CD4-positive, alpha-beta T cell (primary cell): ENCODE measurements at regions of chr13 and their contacts with region 1.

Region 1: DNA sequence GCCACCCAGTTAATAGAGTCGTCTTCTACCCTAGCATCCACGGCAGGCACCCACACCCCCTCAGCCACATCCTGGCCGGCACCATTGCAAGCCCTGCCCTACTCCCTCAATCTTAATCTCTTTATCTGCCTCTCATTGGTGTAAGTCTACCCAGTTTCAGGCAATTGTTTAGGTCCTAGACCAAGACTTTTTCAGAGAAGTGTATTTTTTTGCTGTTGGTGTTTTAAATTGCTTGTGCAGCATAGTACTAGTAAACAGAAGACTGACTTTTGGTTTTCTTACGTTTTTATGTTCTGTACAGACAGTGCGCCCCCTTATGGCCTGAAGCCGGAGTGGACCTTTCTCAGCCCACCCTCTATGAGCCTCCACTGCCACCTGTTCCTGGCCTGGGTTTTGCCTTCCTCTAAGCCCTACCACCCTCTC is 2.3 kb upstream of the LCP1 start:
- DNase-seq: peak; percentile 51 to 90 (median 66)
- ATAC-seq: peak; percentile 56
- H3K4me3 ChIP-seq: peak overlapping the region; percentile 21
- H3K4me3 Mint-ChIP-seq: peak overlapping the region; percentile 76
- H3K27ac ChIP-seq: peak overlapping the region; percentile 84 to 91
- H3K27ac Mint-ChIP-seq: peak overlapping the region; percentile 98
- H3K4me1 ChIP-seq: peaks cover 33% of the 10 kb centered on the region
- H3K4me1 Mint-ChIP-seq: peaks cover 47% of the 10 kb centered on the region
- H3K27me3 ChIP-seq: no peaks in the 10 kb centered on the region
- H3K27me3 Mint-ChIP-seq: no peaks in the 10 kb centered on the region
- CTCF ChIP-seq: peak; percentile 74

Region 2: DNA sequence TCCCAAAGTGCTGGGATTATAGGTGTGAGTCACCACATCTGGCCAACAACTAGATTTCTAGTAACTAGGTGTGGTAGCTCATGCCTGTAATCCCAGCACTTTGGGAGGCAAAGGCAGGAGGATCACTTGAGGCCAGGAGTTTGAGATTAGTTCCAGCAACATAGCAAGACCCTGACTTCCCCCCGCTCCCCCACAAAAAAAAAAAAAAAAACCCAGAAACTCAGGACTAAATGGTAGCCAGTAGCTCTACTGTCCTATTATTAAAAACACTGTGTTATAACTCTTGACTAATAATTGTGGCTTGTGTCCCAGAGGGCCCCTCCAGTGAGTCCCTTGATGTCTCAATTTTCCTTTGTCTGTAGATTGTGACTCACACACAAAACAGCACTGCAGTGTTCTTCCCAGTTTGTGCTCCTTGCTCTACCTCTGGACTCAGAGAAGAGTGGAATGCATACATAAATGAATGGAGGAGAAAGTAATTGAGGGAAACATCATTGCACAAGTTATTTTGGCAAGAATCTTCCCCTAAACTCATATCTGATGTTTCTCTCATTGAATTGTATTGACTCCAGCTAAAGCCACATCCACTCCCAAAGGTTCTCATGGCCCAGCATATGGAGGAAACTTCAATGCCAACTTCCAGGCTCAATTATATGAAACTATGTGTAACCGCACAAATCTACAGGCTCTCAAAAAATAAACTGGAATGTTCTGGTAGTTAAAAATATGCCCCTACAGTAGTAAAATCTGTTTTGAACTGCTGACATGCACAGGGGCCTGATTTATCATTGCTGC is 852.1 kb before region 1 on chr13:
- CTCF ChIA-PET with region 1: no interaction called
- POLR2A ChIA-PET with region 1: no interaction called
- intact Hi-C with region 1: loop called in 1 of 2 experiments (anchors 10 kb)
- DNase-seq: peak in 1 of 14 experiments; percentile 18
- ATAC-seq: no peak
- H3K4me3 ChIP-seq: no peak overlapping the region
- H3K4me3 Mint-ChIP-seq: no peak overlapping the region
- H3K27ac ChIP-seq: no peak overlapping the region
- H3K27ac Mint-ChIP-seq: peak overlapping the region; percentile 84
- H3K4me1 ChIP-seq: peaks cover 84% of the 10 kb centered on the region
- H3K4me1 Mint-ChIP-seq: peaks cover 94% of the 10 kb centered on the region
- H3K27me3 ChIP-seq: no peaks in the 10 kb centered on the region
- H3K27me3 Mint-ChIP-seq: no peaks in the 10 kb centered on the region
- CTCF ChIP-seq: no peak

Region 3: DNA sequence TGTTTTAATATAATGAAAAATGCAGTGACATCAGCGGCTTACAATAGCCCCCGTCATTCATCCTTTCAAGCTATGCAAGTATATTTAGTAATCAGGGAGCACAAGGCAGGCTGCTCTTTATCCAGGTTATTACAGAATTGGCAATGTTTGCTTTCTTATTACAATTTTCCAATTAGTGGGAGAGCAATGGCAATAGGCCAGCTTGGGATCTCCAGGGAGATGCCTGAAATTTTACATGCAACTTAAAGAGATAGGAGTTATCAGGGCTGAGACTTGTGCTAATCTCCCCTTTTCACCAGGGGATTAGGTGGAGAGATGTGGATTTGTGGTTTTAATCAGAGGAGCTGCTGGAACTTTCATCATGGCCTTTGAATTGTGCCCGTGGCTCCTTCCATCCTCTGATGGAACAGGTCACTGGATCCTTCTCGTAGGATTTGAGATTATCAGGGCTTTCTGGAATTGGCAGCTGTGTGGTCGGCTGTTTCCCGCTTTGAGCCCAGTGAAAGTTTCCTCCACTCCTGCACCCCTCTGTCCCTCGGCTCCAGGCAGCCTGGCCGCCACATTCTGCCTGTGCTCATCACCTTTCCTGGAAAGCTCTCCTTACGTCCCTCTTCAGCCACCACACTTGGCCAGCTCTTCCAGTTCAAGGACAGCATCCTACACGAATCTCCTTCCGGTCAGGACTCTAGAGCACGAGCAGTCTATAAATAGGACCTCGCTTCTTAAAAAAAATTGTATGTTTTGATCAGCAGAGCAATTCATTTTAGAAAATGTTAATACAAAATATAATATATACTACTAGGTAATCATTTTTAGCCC is 435.1 kb before region 1 on chr13:
- CTCF ChIA-PET with region 1: no interaction called
- POLR2A ChIA-PET with region 1: no interaction called
- intact Hi-C with region 1: no loop called
- DNase-seq: no peak
- ATAC-seq: no peak
- H3K4me3 ChIP-seq: no peak overlapping the region
- H3K4me3 Mint-ChIP-seq: no peak overlapping the region
- H3K27ac ChIP-seq: no peak overlapping the region
- H3K27ac Mint-ChIP-seq: no peak overlapping the region
- H3K4me1 ChIP-seq: no peaks in the 10 kb centered on the region
- H3K4me1 Mint-ChIP-seq: no peaks in the 10 kb centered on the region
- H3K27me3 ChIP-seq: no peaks in the 10 kb centered on the region
- H3K27me3 Mint-ChIP-seq: no peaks in the 10 kb centered on the region
- CTCF ChIP-seq: no peak

Region 4: GRCh38 chr13:46149272-46150133 is 34.8 kb before region 1 on chr13:
- CTCF ChIA-PET with region 1: no interaction called
- POLR2A ChIA-PET with region 1: interaction called, 3 read pairs
- intact Hi-C with region 1: loop called in 1 of 2 experiments (anchors 5 kb)
- DNase-seq: peak in 1 of 14 experiments; percentile 31
- ATAC-seq: no peak
- H3K4me3 ChIP-seq: no peak overlapping the region
- H3K4me3 Mint-ChIP-seq: no peak overlapping the region
- H3K27ac ChIP-seq: peak overlapping the region in 1 of 2 donors; percentile 32
- H3K27ac Mint-ChIP-seq: peak overlapping the region; percentile 79
- H3K4me1 ChIP-seq: peaks cover 2% of the 10 kb centered on the region
- H3K4me1 Mint-ChIP-seq: peaks cover 52% of the 10 kb centered on the region
- H3K27me3 ChIP-seq: no peaks in the 10 kb centered on the region
- H3K27me3 Mint-ChIP-seq: no peaks in the 10 kb centered on the region
- CTCF ChIP-seq: no peak

Region 5: GRCh38 chr13:46168341-46168740 is 15.9 kb before region 1 on chr13:
- CTCF ChIA-PET with region 1: interaction called, 9 read pairs
- POLR2A ChIA-PET with region 1: interaction called, 217 read pairs
- intact Hi-C with region 1: loop called (anchors 1 to 2 kb)
- DNase-seq: peak in 5 of 14 experiments; percentile 37 to 87 (median 57)
- ATAC-seq: peak; percentile 19
- H3K4me3 ChIP-seq: peak overlapping the region; percentile 4
- H3K4me3 Mint-ChIP-seq: peak overlapping the region; percentile 83
- H3K27ac ChIP-seq: peak overlapping the region; percentile 68 to 73
- H3K27ac Mint-ChIP-seq: peak overlapping the region; percentile 98
- H3K4me1 ChIP-seq: peaks cover 83% of the 10 kb centered on the region
- H3K4me1 Mint-ChIP-seq: peaks cover 94% of the 10 kb centered on the region
- H3K27me3 ChIP-seq: no peaks in the 10 kb centered on the region
- H3K27me3 Mint-ChIP-seq: no peaks in the 10 kb centered on the region
- CTCF ChIP-seq: no peak

Region 6: GRCh38 chr13:46211483-46212351 is 27.4 kb after region 1 on chr13 and contains the start of gene LRRC63:
- CTCF ChIA-PET with region 1: interaction called, 3 read pairs
- POLR2A ChIA-PET with region 1: interaction called, 15 read pairs
- intact Hi-C with region 1: loop called in 1 of 2 experiments (anchors 1 kb)
- DNase-seq: peak; percentile 63 to 92 (median 80)
- ATAC-seq: peak; percentile 91
- H3K4me3 ChIP-seq: peak within 1 kb of the TSS; percentile 61
- H3K4me3 Mint-ChIP-seq: peak within 1 kb of the TSS; percentile 90
- H3K27ac ChIP-seq: peak within 1 kb of the TSS; percentile 54 to 78
- H3K27ac Mint-ChIP-seq: peak within 1 kb of the TSS; percentile 88
- H3K4me1 ChIP-seq: peaks cover 6% of the 10 kb centered on the region
- H3K4me1 Mint-ChIP-seq: peaks cover 22% of the 10 kb centered on the region
- H3K27me3 ChIP-seq: no peaks in the 10 kb centered on the region
- H3K27me3 Mint-ChIP-seq: no peaks in the 10 kb centered on the region
- CTCF ChIP-seq: no peak
- total RNA-seq, gene LRRC63: 0.17 TPM in 1 of 2 experiments, not detected in the other